ENCODE measurements at regions of chr11 and their contacts with region 1.

Region 1: DNA sequence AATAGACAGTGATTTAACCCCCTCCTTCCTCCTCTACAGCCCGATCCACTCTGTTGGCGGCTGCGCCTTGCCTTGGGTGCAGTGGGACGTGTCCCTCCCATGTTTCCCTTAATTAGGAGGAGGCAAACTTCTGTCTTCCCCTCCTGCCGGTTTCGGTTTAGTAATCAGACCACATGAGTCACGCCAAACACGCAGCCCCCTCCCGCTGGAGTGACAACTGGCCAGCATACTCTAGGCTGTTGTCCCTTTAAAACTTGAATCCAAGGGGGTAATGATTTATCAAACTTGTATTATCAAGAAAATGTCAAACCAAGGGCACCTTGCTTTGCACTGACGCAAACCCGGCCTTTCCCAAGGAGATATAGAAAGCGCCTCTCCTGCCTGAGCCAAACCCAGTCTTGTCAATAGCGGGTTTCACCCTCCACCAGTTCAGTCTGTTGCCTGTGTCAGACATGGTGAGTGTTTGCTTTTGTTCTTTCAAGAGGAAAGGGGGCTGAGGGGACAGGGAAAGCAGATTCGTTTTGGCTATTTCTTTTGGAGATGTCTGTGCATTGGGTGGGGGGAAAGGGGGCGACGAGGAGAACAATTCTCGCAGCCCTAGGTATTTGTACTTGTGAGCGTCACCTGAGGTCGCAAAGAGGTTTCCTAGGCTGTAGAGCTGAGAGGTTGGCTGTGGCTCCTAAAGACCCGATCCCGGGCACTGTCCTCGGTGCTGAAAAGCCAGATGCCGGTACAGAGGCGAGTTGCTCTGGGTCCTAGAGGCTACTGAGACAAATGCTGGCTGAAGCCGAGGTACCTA is at the start of gene SLC6A5:
- DNase-seq: peak; percentile 19
- ATAC-seq: 0 out of 2 replicates have a peak, but pooled peaks have one; percentile 51
- H3K4me3 ChIP-seq: no peak within 1 kb of the TSS
- H3K27ac ChIP-seq: no peak within 1 kb of the TSS
- H3K4me1 ChIP-seq: no peaks in the 10 kb centered on the region
- H3K27me3 ChIP-seq: peaks cover 77% of the 10 kb centered on the region
- CTCF ChIP-seq: no peak
- POLR2A ChIP-seq: no peak
- RAD21 ChIP-seq: no peak
- total RNA-seq, gene SLC6A5: not detected in 2 replicates

Region 2: DNA sequence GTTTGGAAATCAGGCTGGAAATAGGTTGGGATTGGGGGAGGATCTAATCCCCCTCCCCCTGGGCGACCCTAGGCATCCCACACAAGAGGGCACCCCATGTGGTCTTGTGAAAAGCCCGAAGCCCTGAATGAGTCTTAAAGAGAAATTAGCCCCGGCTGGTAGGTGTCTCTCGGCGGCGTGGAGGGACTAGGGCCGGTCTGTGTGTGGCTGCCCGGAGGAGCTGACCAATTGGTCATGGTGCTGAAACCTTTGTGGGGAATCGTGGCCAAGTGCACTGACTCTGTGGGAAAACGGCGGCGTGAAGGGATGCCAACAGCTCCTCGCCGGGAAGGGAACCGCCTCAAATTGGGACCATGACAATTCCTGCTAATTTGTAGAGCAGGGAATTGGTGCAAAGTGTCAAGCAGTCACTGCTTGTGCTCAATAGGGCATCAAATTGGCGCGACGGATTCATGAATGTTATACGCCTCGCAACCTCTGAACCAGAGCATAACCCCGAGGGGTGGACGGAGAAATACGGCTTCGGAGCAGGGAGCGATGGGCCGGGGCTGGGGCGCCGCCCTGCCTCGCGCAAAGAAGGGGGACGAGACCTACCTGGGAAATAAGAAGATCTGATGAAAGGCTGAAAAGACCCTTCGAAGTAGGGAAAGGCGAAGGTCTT is 440.7 kb before region 1 on chr11:
- CTCF ChIA-PET with region 1: no interaction called
- POLR2A ChIA-PET with region 1: no interaction called
- dilution Hi-C with region 1: no loop called
- in situ Hi-C with region 1: no loop called
- intact Hi-C with region 1: loop called (anchors 10 kb)
- DNase-seq: peak; percentile 50
- ATAC-seq: peak; percentile 83
- H3K4me3 ChIP-seq: no peak overlapping the region
- H3K27ac ChIP-seq: no peak overlapping the region
- H3K4me1 ChIP-seq: no peaks in the 10 kb centered on the region
- H3K27me3 ChIP-seq: peaks cover 92% of the 10 kb centered on the region
- CTCF ChIP-seq: no peak
- POLR2A ChIP-seq: no peak
- RAD21 ChIP-seq: no peak

Region 3: GRCh38 chr11:20451568-20451967 is 147.9 kb before region 1 on chr11:
- CTCF ChIA-PET with region 1: no interaction called
- POLR2A ChIA-PET with region 1: no interaction called
- dilution Hi-C with region 1: no loop called
- in situ Hi-C with region 1: no loop called
- intact Hi-C with region 1: loop called (anchors 10 kb)
- DNase-seq: no peak
- ATAC-seq: no peak
- H3K4me3 ChIP-seq: no peak overlapping the region
- H3K27ac ChIP-seq: no peak overlapping the region
- H3K4me1 ChIP-seq: no peaks in the 10 kb centered on the region
- H3K27me3 ChIP-seq: no peaks in the 10 kb centered on the region
- CTCF ChIP-seq: no peak
- POLR2A ChIP-seq: no peak
- RAD21 ChIP-seq: no peak